Right ventricle myocardium superior (tissue), 1 donor: ENCODE measurements at regions of chr7 and their contacts with region 1.

Region 1: GRCh38 chr7:1593091-1593866 is 23.4 kb upstream of the PSMG3 start:
- DNase-seq: peak; percentile 15
- ATAC-seq: no peak

Region 2: GRCh38 chr7:1555809-1556540 is 37.3 kb before region 1 on chr7 and contains the start of gene TMEM184A:
- intact Hi-C with region 1: no loop called
- DNase-seq: no peak
- ATAC-seq: peak; percentile 72
- total RNA-seq, gene TMEM184A: 0.30 TPM

Region 3: DNA sequence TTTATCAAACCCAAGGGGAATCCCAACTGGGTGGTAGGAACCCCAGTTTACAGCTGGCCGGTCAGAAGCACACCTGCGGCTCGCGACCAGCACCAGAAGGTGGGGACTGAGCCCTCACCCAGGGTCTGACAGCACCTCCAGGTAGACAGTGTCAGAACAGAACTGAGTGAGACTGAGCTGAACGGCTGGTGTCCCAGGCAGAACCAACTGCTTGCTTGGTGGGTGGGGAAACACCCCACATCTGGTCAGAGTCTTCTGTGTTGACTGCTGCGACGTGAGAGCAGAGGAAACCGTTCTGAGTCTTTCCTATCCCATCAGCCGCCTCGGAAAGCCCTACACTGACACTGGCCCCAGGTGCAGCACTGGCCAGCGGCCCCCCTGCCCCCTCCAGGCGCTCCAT is 478.8 kb after region 1 on chr7:
- intact Hi-C with region 1: loop called (anchors 10 kb)
- DNase-seq: no peak
- ATAC-seq: no peak